Cardiac septum (tissue), 1 donor: ENCODE measurements at regions of chr1 and their contacts with region 1.

Region 1: GRCh38 chr1:8987881-8988617 is 38.2 kb downstream of the SLC2A7 start:
- DNase-seq: peak; percentile 86

Region 2: DNA sequence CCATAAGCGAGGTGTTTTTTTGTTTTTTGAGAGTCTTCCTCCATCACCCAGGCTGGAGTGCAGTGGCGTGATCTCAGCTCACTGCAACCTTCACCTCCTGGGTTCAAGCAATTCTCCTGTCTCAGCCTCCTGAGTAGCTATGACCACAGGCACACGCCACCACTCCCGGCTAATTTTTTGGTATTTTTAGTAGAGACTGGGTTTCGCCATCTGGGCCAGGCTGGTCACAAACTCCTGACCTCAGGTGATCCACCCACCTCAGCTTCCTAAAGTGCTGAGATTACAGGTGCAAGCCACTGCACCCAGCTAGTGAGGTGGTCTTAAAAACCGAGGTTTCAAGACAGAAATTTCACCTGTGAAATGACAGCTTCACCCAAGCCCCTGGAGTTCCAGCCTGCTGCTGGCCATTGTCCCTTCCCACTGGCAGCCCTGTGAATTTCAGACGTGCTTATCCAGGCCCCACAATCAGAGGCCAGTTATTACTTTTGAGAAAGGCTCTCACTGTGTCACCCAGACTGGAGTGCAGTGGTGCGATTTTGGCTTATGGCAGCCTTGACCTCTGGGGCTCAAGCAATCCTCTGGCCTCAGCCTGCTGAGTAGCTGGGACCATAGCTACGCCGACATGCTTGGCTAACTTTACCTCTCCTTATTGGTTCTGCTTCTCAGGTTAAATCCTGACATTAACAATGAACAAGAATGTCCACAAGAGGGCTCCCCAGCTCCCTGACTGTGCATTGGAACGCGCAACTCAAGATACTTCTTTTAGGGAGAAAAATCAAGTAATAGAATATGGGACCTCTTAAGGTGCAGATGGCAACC is 129.0 kb before region 1 on chr1:
- intact Hi-C with region 1: loop called (anchors 2 kb)
- DNase-seq: no peak

Region 3: DNA sequence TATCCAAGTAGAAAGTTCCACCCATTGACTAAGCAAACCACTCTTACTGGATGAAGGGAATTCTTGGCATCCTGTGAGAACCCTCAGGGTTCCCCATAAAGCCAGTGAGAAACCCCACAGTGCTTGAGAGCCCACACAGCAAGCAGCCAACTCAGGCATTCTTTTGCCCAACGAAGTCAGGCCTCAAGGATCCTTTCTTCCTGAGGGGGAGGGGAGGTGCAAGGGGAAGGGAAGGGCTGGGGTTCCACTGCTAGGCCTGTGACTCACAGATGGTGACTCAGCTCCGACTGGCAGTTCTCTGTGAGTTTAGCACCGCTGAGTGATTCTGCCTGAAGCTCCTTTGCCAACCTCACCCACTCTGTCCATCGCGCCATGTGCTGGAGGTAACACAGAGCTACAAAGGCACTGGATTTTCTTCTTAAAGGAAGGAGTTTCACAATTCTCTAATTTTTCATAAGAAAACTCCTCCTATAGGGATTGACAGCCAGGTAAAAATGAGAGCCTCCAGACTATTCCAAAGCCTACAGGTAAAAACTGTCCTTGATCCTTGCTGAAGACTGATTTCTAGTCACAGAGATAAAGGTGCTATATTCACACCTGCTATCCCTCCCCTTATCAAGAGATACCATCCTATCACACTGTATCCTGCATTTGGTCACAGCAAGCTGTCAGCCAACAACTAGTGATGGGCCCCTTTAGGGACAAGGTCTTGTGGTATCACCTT is 114.4 kb before region 1 on chr1:
- intact Hi-C with region 1: loop called (anchors 5 kb)
- DNase-seq: peak; percentile 96